ENCODE measurements at regions of chr19 and their contacts with region 1.

Region 1: DNA sequence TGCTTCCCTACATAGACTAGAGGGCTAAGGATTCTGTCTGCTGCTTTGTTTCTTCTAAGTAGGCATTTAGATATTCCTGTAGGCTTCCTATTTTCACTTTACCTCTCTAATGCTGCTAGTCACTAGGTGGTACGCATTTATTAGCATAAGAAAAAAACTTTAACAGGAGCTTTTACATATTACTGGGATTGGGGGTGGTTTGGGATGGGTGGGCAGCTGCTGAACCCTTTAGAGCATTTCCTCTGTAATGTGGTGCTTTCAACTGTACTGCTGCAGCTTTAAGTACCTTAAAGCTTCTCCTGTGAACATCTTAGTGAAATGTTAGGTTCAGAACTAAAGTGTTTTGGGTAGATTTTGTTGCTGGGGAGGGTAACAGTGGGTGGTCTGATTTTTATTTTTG is 92.6 kb downstream of the ZNF486 start:
- DNase-seq: no peak

Region 2: DNA sequence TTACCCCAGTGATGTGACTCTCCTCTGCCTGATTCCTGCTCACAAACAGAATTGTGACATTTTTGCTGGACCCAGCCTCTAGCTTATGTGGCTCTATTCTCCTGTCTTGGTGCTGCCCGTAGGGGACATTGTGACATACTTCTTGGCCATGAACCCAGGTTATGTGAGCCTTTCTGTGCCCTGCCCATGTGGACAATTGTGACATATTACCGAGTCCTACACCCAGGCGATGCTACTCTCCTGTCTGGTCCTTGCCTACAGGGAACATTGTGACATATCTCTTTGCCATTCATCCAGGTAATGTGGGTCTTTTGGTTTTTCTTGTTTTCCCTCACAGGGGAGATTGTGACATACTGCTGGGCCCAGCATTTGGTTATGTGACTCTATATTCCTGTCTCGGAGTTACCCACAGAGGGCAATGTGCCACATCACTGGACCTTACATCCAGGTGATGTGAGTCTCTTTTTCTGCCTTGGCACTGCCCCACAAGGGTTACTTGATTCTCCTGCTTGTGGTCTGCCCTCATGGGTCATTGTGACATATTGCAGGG is 1647.9 kb after region 1 on chr19:
- intact Hi-C with region 1: loop called in 1 of 2 experiments (anchors 5 kb)
- DNase-seq: no peak